GM10248 (cell line): ENCODE measurements at regions of chr11 and their contacts with region 1.

Region 1: DNA sequence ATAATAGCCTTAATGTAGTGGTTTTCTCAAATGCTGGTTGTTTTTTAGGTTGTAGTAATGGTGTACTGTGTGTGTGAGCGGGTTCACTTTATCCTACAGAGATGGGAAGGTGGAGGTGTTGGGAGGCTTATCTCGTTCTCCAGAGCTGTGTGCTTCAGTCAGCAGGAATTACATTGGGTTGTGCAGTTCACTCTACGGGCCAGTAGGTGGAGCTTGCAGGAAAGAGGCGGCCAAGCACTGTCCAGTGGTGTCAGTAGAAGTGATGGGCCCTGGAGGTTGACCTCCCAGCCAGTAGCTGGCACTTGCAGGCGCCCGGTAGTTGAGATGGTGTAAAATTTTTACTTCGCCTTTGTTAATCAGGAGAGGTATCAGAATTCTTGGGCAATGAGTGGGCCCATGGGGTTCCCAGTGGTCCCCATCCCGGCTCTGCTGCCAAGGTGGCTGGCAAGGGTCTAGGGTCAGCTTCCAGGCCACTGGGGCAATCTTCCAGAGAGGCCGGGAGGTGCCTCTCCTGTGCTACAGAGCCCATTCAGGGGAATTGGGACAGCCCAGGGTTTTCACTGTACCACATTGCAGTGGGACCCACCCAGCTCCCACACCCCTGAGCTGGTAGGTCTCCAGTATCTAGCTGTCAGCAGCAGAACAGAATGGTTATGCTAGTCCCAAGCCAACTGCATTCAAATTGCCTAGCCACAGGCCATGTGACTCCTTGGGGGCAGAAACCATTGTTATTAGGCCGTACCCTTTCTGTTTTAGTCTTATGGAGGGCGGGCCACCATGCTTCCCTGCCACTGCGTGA is 43.9 kb downstream of the BIRC2 start:
- DNase-seq: peak; percentile 63
- CTCF ChIP-seq: peak; percentile 92

Region 2: GRCh38 chr11:101706541-101706940 is 684.3 kb before region 1 on chr11:
- CTCF ChIA-PET with region 1: no interaction called
- POLR2A ChIA-PET with region 1: no interaction called
- DNase-seq: no peak
- CTCF ChIP-seq: no peak

Region 3: DNA sequence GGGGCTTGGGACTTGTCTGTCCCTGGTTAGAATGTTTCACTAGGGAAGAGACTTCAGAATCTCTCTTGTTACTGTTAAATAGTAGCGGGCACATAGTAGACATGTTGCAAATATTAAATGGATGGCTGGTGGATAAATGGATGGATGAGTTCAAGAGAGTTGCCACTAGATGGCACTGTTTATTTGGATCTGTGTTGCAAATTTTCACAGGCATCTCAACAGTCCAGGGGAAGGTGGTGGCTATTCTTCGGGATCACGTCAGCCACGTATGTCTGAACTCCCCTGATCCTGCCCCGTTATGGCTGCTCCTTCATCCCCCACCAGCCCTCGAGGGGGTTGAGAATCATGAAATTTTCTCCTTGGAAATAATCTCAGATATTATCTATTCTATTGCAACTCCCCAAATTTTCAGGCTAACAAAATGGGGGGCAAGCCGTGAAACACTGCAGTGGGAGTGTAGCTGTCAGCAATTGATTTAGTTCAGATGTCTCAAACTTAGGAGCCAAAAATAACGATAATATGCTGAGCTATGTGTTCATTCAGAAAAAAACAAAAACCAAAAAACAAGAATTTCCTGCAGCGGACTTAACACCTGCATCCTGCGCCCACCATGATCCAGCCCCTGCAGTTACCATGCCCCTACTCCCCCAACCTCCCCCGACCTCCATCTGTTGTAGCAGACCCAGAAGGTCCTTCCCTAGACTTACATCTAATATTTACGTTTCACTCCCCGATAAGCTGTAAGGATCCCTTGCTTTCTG is 102.7 kb before region 1 on chr11:
- CTCF ChIA-PET with region 1: interaction called, 14 read pairs
- POLR2A ChIA-PET with region 1: no interaction called
- DNase-seq: peak; percentile 80
- CTCF ChIP-seq: peak; percentile 70

Region 4: GRCh38 chr11:102367364-102367763 is 23.5 kb before region 1 on chr11:
- CTCF ChIA-PET with region 1: interaction called, 19 read pairs
- POLR2A ChIA-PET with region 1: interaction called, 4 read pairs
- DNase-seq: no peak
- CTCF ChIP-seq: no peak

Region 5: GRCh38 chr11:102420547-102420946 is 29.7 kb after region 1 on chr11:
- CTCF ChIA-PET with region 1: interaction called, 73 read pairs
- POLR2A ChIA-PET with region 1: no interaction called
- DNase-seq: no peak
- CTCF ChIP-seq: no peak

Region 6: DNA sequence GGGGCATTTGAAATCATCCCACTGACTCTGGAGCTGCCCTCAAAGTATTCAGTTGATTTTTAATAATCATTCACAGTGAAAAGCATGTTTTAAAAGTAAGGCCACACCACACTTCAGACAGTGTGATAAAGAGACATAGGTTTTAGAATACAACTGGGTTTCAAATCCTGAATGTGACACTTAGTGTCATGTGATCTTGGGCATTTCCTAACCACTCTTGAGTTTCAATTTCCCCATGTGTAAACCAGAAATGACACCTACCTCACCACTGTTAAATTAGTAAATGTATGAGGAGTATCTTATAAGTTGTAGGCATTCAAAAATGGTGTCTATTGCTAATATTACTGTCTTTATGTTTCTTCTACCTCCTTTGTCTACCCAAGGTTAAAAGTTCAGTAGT is 56.3 kb after region 1 on chr11:
- CTCF ChIA-PET with region 1: interaction called, 10 read pairs
- POLR2A ChIA-PET with region 1: interaction called, 3 read pairs
- DNase-seq: no peak
- CTCF ChIP-seq: no peak

Region 7: DNA sequence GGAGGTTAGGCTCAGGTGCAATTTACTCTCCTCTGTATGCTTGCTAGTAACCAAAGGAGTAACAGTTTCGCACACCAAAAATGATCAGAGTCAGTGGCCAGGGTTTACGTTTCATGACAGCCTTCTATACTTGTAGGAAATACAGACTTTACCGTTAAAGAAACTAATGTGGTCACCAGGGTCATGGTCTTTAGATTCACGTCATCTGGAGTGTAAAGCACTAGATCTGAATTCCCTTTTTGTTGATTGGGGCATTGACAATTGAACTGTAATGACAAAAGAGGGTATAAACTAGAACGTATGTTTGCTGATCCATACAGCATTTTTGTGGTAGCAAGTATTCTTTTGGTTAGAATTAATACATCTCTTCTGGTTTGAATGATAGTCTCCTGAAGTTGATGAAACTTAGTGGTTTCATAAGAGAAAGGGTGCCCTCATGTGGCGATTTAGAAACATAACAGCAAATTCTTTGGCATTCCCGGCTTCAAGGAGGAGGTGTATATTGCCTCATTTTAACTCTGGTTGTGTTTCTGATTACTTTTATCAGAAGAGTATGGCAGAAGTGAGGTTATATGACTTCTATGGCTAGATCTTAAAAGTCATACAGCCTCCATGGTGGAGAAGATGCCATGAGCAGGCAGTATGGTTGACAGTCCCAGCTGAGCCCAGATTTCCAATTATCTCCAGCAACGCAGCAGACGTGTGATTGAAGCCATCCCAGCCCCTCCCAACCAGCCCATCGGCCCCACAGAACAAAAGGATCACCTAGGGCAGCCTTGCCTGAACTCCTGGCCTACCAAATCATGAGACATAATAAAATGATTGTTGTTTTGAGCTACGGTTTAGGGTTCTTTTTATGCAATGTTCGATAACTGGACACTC is 104.5 kb after region 1 on chr11:
- CTCF ChIA-PET with region 1: interaction called, 31 read pairs
- POLR2A ChIA-PET with region 1: no interaction called
- DNase-seq: peak; percentile 58
- CTCF ChIP-seq: peak; percentile 68